PC-3 (cell line): ENCODE measurements at regions of chr6 and their contacts with region 1.

Region 1: GRCh38 chr6:139124887-139125672 is 9.8 kb upstream of the HECA start:
- DNase-seq: peak; percentile 73
- ATAC-seq: peak; percentile 91
- H3K4me3 ChIP-seq: no peak overlapping the region
- H3K27ac ChIP-seq: no peak overlapping the region
- H3K4me1 ChIP-seq: peaks cover 15% of the 10 kb centered on the region
- H3K27me3 ChIP-seq: no peaks in the 10 kb centered on the region
- CTCF ChIP-seq: peak; percentile 66

Region 2: GRCh38 chr6:138912308-138912707 is 212.8 kb before region 1 on chr6:
- CTCF ChIA-PET with region 1: no interaction called
- POLR2A ChIA-PET with region 1: no interaction called
- intact Hi-C with region 1: no loop called
- DNase-seq: no peak
- ATAC-seq: no peak
- H3K4me3 ChIP-seq: no peak overlapping the region
- H3K27ac ChIP-seq: no peak overlapping the region
- H3K4me1 ChIP-seq: no peaks in the 10 kb centered on the region
- H3K27me3 ChIP-seq: no peaks in the 10 kb centered on the region
- CTCF ChIP-seq: no peak

Region 3: DNA sequence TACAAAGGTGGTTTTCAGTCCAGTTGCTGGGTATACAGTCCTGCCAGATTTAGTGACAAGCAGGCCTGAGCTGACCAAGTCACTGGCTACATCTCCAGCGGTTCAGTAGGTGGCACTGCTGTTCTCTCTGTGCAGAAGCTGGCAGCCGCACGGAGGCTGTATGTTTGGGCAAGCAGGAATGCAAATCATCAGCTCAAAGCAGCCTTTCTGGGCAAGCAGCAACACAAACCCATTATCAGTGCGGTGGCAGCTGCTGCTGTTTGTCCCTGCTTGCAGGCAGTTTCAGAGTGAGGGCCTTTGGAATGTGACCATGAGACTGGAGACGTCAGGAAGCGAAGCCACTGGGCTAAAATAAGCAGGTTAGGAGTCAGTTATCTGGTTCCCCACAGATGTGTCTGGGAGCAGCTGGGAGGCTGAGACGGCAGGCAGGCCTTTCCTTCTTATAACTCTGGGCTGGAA is 94.2 kb after region 1 on chr6:
- CTCF ChIA-PET with region 1: no interaction called
- POLR2A ChIA-PET with region 1: no interaction called
- intact Hi-C with region 1: loop called (anchors 1 kb)
- DNase-seq: peak; percentile 75
- ATAC-seq: peak; percentile 100
- H3K4me3 ChIP-seq: no peak overlapping the region
- H3K27ac ChIP-seq: no peak overlapping the region
- H3K4me1 ChIP-seq: no peaks in the 10 kb centered on the region
- H3K27me3 ChIP-seq: no peaks in the 10 kb centered on the region
- CTCF ChIP-seq: peak; percentile 85

Region 4: GRCh38 chr6:139533573-139534471 is 408.7 kb after region 1 on chr6:
- CTCF ChIA-PET with region 1: no interaction called
- POLR2A ChIA-PET with region 1: no interaction called
- intact Hi-C with region 1: no loop called
- DNase-seq: no peak
- ATAC-seq: no peak
- H3K4me3 ChIP-seq: no peak overlapping the region
- H3K27ac ChIP-seq: no peak overlapping the region
- H3K4me1 ChIP-seq: no peaks in the 10 kb centered on the region
- H3K27me3 ChIP-seq: no peaks in the 10 kb centered on the region
- CTCF ChIP-seq: no peak